Activated CD8-positive, alpha-beta T cell treated with anti-CD3 and anti-CD28 coated beads for 36 hours (primary cell): ENCODE measurements at regions of chr12 and their contacts with region 1.

Region 1: DNA sequence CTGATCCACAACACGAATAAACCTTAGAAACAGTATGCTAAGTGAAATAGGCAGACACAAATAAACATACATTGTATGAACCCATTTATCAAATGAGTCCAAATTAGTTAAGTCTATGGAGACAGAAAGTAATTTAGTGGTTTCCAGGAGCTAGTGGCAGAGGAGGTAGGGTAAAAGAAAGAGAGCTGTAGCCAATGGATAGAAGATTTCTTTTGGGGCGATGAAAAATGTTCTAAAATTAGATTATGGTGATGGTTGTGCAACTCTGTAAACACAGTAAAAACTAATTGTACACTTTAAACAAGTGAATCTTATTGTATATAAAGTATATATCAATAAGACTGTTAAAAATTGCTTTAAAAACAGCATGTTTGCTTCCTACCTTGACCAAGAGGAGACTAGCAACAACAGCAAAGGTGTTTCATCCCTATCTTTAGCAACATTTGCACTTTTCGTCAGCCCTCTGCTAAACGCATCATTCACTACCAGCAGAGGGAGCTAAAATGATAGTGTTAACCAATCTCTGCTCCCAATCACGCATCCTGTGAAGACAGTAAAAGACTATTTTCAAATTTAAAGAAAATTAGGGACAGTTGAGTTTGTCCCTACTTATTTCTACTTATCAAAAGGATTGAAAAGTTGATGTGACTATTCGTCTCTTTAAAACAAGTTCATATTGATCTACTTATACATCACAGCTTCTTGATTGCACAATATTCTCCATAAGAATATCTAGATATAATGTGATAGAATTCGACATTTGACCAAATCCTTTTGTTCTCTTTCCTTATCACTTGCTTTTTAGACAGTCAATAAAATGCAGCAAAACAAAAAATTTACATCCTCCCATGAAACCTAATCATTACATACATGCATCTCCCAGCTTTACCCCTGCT is 24.0 kb upstream of the LGR5 start:
- DNase-seq: peak; percentile 27
- ATAC-seq: peak; percentile 61
- H3K4me3 Mint-ChIP-seq: no peak overlapping the region
- H3K27ac Mint-ChIP-seq: no peak overlapping the region
- H3K4me1 Mint-ChIP-seq: no peaks in the 10 kb centered on the region
- H3K27me3 Mint-ChIP-seq: peaks cover 6% of the 10 kb centered on the region
- CTCF ChIP-seq: peak; percentile 80

Region 2: DNA sequence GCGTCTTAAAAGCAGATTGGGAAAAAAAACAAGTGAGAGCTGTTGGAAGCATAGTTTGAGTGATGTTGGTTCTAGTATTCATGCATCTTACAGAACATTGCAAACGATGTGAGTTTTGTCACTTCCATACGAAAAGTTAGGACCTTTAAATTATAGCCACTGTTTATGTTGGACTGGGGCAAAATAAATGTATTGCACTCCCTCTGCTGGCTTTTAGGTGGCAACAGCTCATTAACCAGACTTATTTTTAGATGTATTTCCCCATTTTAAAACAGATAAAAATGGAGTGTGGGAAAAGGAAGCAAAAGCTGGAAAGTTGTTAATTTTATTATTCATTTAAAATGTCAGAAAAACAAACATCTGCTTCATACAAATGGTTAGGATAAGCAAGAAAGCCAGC is 135.9 kb after region 1 on chr12:
- CTCF ChIA-PET with region 1: interaction called, 14 read pairs
- POLR2A ChIA-PET with region 1: no interaction called
- intact Hi-C with region 1: loop called (anchors 5 kb)
- DNase-seq: no peak
- ATAC-seq: no peak
- H3K4me3 Mint-ChIP-seq: no peak overlapping the region
- H3K27ac Mint-ChIP-seq: no peak overlapping the region
- H3K4me1 Mint-ChIP-seq: peaks cover under 1% of the 10 kb centered on the region
- H3K27me3 Mint-ChIP-seq: peaks cover 2% of the 10 kb centered on the region
- CTCF ChIP-seq: no peak